Right ventricle myocardium inferior (tissue), 1 donor: ENCODE measurements at regions of chr16 and their contacts with region 1.

Region 1: DNA sequence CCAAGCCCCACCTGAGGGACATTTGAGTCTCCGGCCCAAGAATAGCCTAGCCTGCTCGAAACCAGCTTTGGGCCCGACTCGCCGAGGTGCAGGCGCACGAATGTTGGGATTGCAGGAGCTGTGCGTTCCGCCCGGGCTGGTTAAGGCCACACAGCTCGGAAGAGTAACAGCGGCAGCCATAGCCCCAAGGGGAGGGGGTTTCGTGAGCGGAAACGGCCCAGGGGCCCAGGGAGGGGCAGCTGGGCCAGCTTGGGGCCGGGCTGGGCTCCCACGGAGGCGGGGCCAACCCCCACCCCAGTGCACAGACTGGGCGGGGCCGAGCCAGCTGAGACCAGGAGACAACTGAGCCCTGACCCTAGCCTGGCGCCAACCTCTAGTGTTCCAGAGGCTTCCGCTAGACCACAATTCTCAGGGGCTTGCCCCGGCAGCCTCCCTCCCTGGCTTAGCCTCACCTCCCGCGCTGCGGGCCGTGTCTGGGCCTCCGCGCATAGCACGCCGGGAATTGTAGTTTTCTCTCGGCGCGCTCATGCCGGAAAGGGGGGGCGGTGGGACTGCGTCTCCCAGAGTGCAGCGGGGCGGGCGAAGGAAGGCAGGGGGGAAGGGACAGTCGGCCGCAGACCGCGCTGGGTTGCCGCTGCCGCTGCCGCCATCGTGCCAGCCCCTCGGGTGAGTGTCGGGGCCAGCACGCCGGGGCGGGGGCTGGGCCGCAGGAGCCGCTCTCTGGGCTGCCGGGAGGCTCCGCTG is at the start of gene NUTF2:
- DNase-seq: peak; percentile 98
- ATAC-seq: peak; percentile 88
- total RNA-seq, gene NUTF2: 86.6 TPM

Region 2: DNA sequence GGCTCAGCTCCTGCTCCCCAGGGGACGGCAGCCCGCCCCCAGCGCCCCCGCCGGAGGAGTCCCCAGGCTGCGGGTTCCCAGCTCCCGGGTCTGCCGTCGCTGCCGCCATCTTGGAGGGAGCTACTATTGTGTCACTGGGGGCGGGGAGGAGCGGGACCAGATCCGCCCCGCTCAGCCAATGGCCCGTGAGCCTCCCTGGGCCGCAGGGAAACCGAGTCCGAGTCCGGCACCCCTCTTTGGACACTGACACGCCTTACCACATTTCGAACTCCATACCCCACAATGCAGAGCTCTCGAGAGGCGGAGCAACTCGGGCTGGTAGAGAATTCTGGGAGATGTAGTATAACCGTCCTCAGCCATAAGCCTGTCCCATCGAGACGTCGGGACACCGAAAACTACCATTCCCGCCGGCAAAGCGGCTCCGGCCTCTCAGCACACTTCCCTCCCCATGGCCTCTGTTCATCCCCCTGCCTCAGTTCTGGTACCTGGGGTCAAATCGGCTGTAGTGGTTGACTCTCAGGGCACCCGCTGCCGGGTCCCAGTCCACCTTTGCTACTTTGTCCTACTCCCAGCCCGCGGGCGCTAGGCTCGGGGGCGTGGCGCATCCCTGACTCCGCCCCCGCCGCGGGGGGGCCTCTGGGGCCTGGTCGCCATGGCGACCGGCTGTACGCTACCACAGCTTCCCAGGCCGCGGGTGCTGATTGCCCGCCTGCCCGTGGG is 39.9 kb before region 1 on chr16 and contains the starts of genes RANBP10 and TSNAXIP1:
- intact Hi-C with region 1: loop called (anchors 2 kb)
- DNase-seq: peak; percentile 97
- ATAC-seq: peak; percentile 98
- total RNA-seq, gene RANBP10: 11.1 TPM
- total RNA-seq, gene TSNAXIP1: 0.41 TPM

Region 3: GRCh38 chr16:67862623-67863583 is 16.4 kb after region 1 on chr16:
- intact Hi-C with region 1: loop called (anchors 1 kb)
- DNase-seq: peak; percentile 82
- ATAC-seq: peak; percentile 94

Region 4: GRCh38 chr16:67872786-67873537 is 26.5 kb after region 1 on chr16 and contains the start of gene EDC4:
- intact Hi-C with region 1: loop called (anchors 2 kb)
- DNase-seq: peak; percentile 94
- ATAC-seq: peak; percentile 88
- total RNA-seq, gene EDC4: 35.4 TPM